Pancreas (tissue), 10 donors: ENCODE measurements at regions of chr4 and their contacts with region 1.

Region 1: GRCh38 chr4:124334119-124334518 is 378.4 kb downstream of the ANKRD50 start:
- DNase-seq: peak in 2 of 6 donors; percentile 18 to 32
- ATAC-seq: peak; percentile 48 to 90 (median 86)
- H3K4me3 ChIP-seq: no peak overlapping the region
- H3K27ac ChIP-seq: no peak overlapping the region
- H3K4me1 ChIP-seq: no peaks in the 10 kb centered on the region
- H3K27me3 ChIP-seq: no peaks in the 10 kb centered on the region
- CTCF ChIP-seq: peak; percentile 16 to 41 (median 28)

Region 2: DNA sequence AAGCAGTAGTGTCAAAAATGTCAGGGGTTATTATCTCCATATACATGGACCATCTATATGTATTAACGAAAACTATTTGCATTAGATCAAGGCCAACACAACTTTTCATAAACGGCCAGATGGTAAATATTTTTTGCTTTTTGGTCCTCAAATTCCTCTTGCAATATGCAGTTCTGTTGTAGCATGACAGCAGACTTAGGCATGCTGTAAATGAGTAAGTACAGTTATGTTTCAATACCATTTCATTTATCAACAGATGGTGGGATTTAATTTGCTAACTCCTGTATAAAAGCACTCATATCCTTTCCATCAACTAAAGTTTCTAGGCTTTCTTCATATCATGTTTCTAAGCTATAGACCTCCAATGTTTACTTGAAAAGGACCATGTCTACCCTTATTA is 170.3 kb after region 1 on chr4:
- intact Hi-C with region 1: no loop called
- DNase-seq: no peak
- ATAC-seq: no peak
- H3K4me3 ChIP-seq: no peak overlapping the region
- H3K27ac ChIP-seq: no peak overlapping the region
- H3K4me1 ChIP-seq: no peaks in the 10 kb centered on the region
- H3K27me3 ChIP-seq: no peaks in the 10 kb centered on the region
- CTCF ChIP-seq: no peak

Region 3: DNA sequence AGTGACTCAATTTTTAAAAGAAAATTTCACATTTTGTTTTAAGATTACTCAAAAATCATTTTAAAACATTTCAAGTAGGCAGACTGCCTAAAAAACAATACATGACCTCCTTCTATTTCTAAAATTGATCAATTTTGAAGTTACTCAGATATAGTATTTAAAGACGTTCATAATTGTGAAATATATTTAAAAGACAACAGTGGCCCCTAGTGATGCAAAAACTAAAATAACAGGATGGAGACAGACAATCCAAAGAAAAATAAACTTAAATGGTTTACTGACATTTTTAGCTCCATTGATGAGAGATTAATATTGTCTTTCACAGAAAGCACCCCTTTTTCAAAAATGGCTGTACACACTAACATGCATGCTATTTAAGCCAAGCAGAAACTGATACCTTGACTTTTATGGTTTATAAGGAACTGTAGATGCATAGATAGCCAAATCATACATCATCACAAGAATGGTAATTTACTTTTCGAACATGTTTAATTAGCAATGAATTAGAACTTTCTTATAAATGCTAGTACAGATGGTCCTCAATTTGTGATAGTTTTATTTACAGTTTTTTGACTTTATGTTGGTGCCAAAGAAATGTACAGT is 910.8 kb after region 1 on chr4:
- intact Hi-C with region 1: loop called in 2 of 3 experiments (anchors 10 kb)
- DNase-seq: no peak
- ATAC-seq: peak in 2 of 4 donors; percentile 42 to 45
- H3K4me3 ChIP-seq: no peak overlapping the region
- H3K27ac ChIP-seq: no peak overlapping the region
- H3K4me1 ChIP-seq: no peaks in the 10 kb centered on the region
- H3K27me3 ChIP-seq: no peaks in the 10 kb centered on the region
- CTCF ChIP-seq: peak in 2 of 4 donors; percentile 26 to 32

Region 4: GRCh38 chr4:125283707-125284279 is 949.7 kb after region 1 on chr4:
- intact Hi-C with region 1: loop called in 1 of 3 experiments (anchors 10 kb)
- DNase-seq: no peak
- ATAC-seq: peak in 3 of 4 donors; percentile 34 to 46 (median 43)
- H3K4me3 ChIP-seq: no peak overlapping the region
- H3K27ac ChIP-seq: no peak overlapping the region
- H3K4me1 ChIP-seq: no peaks in the 10 kb centered on the region
- H3K27me3 ChIP-seq: no peaks in the 10 kb centered on the region
- CTCF ChIP-seq: peak; percentile 26 to 57 (median 39)